Spleen (tissue), 13 donors: ENCODE measurements at regions of chr10 and their contacts with region 1.

Region 1: DNA sequence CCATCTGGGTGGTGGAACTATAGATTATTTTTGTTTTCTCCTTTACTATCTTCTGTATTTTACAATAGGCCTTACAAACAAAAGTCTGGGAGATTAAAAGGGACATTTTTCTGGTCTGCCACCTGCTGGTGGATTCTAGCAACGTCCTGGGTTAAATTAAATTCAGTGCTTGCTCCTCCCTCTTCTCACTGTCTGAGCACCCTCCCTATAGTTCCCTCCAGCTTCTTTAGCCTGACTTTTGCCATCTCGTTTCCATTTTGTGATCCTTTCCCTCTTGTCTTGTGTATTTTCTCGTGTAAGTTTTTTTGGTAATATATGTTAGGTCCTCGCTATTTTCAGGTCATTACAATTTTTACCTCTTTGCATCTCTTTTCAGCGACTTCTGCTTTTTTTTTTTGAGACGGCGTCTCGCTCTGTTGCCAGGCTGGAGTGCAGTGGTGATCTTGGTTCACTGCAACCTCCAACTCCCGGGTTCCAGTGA is 16.1 kb downstream of the ANKRD16 start:
- DNase-seq: no peak
- H3K4me3 ChIP-seq: peak overlapping the region in 5 of 8 donors; percentile 7 to 48 (median 22)
- H3K27ac ChIP-seq: peak overlapping the region in 5 of 8 donors; percentile 54 to 69 (median 64)
- H3K4me1 ChIP-seq: peaks cover 0 to 15% (median 8%) of the 10 kb centered on the region in 6 donors
- H3K27me3 ChIP-seq: no peaks in the 10 kb centered on the region
- CTCF ChIP-seq: peak; percentile 61 to 92 (median 81)
- POLR2A ChIP-seq: no peak

Region 2: DNA sequence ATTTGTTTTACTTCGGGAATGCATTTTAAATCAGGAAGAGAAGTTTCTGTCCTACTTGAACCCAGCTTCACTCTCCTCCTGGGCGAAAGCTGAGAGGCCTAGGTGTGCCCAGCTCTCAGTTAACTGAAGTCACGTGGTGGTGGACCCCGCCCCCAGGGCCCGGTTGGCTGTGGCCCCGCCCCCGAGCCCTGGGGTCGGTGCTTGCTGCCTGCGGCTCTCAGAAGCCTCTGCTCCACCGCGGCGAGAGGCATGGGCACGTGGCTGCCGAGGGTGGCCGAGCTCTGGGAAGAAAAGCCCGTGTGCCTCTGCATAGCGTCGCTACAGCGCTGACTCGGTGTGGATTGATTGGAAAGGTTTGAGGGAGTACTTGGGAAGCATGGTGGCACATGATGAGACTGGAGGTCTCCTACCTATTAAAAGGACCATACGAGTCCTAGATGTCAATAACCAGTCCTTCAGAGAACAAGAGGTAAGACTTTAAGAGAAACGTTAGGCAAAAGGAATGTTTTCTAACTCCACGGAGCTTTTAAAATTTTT is 427.1 kb before region 1 on chr10:
- intact Hi-C with region 1: loop called (anchors 10 kb)
- DNase-seq: peak; percentile 95
- H3K4me3 ChIP-seq: peak overlapping the region; percentile 10 to 65 (median 29)
- H3K27ac ChIP-seq: peak overlapping the region in 4 of 8 donors; percentile 53 to 64 (median 62)
- H3K4me1 ChIP-seq: peaks cover 0 to 49% (median 25%) of the 10 kb centered on the region in 6 donors
- H3K27me3 ChIP-seq: no peaks in the 10 kb centered on the region
- CTCF ChIP-seq: no peak
- POLR2A ChIP-seq: peak in 1 of 3 donors; percentile 50

Region 3: GRCh38 chr10:5684318-5684970 is 189.1 kb before region 1 on chr10 and contains the start of gene TASOR2:
- intact Hi-C with region 1: loop called (anchors 10 kb)
- DNase-seq: peak; percentile 99
- H3K4me3 ChIP-seq: peak within 1 kb of the TSS; percentile 95 to 100 (median 98)
- H3K27ac ChIP-seq: peak within 1 kb of the TSS; percentile 90 to 97 (median 94)
- H3K4me1 ChIP-seq: peaks cover 23 to 49% (median 44%) of the 10 kb centered on the region in 6 donors
- H3K27me3 ChIP-seq: no peaks in the 10 kb centered on the region
- CTCF ChIP-seq: peak in 1 of 11 experiments; percentile 32
- POLR2A ChIP-seq: no peak
- total RNA-seq, gene TASOR2: 58.3 to 87.9 (median 72.6) TPM

Region 4: GRCh38 chr10:5813287-5814109 is 60.1 kb before region 1 on chr10 and contains the start of gene GDI2:
- intact Hi-C with region 1: loop called (anchors 10 kb)
- DNase-seq: peak; percentile 98
- H3K4me3 ChIP-seq: peak within 1 kb of the TSS; percentile 82 to 95 (median 90)
- H3K27ac ChIP-seq: peak within 1 kb of the TSS; percentile 95 to 99 (median 98)
- H3K4me1 ChIP-seq: peaks cover 34 to 88% (median 74%) of the 10 kb centered on the region in 6 donors
- H3K27me3 ChIP-seq: no peaks in the 10 kb centered on the region
- CTCF ChIP-seq: peak in 3 of 11 experiments; percentile 33 to 59 (median 52)
- POLR2A ChIP-seq: peak; percentile 10 to 93 (median 78)
- total RNA-seq, gene GDI2: 190 to 272 (median 211) TPM

Region 5: DNA sequence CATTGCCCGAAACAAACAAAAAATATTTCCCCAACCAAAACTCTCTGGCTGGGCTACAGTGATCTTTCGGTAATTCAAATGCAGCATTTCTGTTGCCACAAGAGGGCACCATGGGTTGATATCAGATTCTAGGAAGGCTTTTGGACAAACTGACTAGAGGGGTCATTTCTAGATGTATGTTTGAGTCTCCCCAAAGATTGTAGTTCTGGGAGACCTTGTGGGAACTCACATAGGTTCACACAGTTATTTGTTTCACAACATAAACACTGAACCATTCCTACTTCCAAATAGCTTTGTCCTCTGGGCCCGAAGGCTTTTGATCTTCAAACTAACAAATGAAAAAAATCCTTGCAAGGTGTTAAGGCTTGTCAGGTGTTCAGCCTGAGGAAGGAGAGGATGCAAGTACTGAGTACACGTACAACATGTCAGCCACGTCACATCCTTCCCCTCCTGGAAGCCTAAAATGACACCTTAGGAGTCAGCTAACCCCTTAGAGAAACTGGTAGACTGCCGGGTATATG is 140.7 kb after region 1 on chr10:
- intact Hi-C with region 1: no loop called
- DNase-seq: no peak
- H3K4me3 ChIP-seq: no peak overlapping the region
- H3K27ac ChIP-seq: peak overlapping the region in 5 of 8 donors; percentile 13 to 69 (median 38)
- H3K4me1 ChIP-seq: peaks cover 0 to 31% (median 13%) of the 10 kb centered on the region in 6 donors
- H3K27me3 ChIP-seq: no peaks in the 10 kb centered on the region
- CTCF ChIP-seq: peak; percentile 48 to 88 (median 80)
- POLR2A ChIP-seq: no peak